Ascending aorta (tissue), 2 donors: ENCODE measurements at regions of chr22 and their contacts with region 1.

Region 1: GRCh38 chr22:35582861-35583670 is 34.1 kb downstream of the MB start:
- DNase-seq: no peak
- H3K4me3 ChIP-seq: no peak overlapping the region
- H3K27ac ChIP-seq: no peak overlapping the region
- H3K4me1 ChIP-seq: no peaks in the 10 kb centered on the region
- H3K27me3 ChIP-seq: no peaks in the 10 kb centered on the region
- CTCF ChIP-seq: peak; percentile 85 to 95 (median 90)

Region 2: GRCh38 chr22:35116817-35117216 is 466.2 kb before region 1 on chr22:
- intact Hi-C with region 1: no loop called
- DNase-seq: no peak
- H3K4me3 ChIP-seq: no peak overlapping the region
- H3K27ac ChIP-seq: no peak overlapping the region
- H3K4me1 ChIP-seq: no peaks in the 10 kb centered on the region
- H3K27me3 ChIP-seq: no peaks in the 10 kb centered on the region
- CTCF ChIP-seq: no peak

Region 3: GRCh38 chr22:35430897-35431322 is 152.2 kb before region 1 on chr22:
- intact Hi-C with region 1: loop called (anchors 1 kb)
- DNase-seq: peak; percentile 29 to 90
- H3K4me3 ChIP-seq: no peak overlapping the region
- H3K27ac ChIP-seq: peak overlapping the region in 1 of 2 donors; percentile 3
- H3K4me1 ChIP-seq: peaks cover 0 to 7% of the 10 kb centered on the region in 2 donors
- H3K27me3 ChIP-seq: no peaks in the 10 kb centered on the region
- CTCF ChIP-seq: peak; percentile 95 to 97 (median 96)